ENCODE measurements at regions of chr5 and their contacts with region 1.

Region 1: DNA sequence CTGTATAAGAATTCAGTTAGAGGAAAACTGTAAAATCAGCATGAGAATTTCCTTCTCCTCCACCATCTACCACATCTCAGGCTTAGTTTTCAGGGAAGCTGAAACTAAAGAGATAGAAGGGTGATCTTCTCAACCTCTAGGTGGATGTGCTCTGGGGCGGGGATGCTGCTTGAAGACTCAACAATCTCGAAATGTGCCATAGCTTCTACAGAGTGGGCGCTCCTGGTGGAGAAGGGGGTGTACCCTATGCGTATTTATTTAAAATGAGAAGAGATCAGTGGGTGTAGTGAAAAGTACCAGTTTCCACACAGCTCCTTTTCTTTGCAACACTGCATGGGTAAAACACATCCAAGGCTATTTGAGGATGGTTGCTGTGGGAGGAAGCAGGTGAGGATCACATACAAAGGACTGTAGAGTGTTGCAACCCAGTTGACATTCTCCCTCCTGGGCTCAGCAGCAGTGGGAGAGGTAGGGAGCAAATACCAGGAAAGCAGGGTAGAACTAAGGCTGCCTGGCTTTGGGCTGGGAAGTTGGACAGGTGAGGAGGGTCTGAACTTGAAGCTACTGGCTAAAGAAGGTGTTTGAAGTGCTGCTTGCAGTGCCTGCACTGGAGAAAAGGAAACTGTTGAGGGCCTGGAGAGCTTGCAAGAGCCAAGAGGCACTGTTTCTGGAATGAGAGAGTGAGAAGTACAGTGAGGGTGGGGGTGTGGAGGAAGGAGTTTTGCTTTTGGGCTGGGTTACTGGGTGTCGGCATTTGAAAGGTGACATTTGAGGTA is 73.1 kb downstream of the MAST4 start:
- DNase-seq: no peak
- ATAC-seq: no peak
- H3K4me3 Mint-ChIP-seq: no peak overlapping the region
- H3K27ac Mint-ChIP-seq: no peak overlapping the region
- H3K4me1 Mint-ChIP-seq: no peaks in the 10 kb centered on the region
- H3K27me3 Mint-ChIP-seq: peaks cover 21% of the 10 kb centered on the region

Region 2: GRCh38 chr5:66511491-66511890 is 157.8 kb before region 1 on chr5:
- CTCF ChIA-PET with region 1: no interaction called
- POLR2A ChIA-PET with region 1: no interaction called
- intact Hi-C with region 1: no loop called
- DNase-seq: no peak
- ATAC-seq: no peak
- H3K4me3 Mint-ChIP-seq: no peak overlapping the region
- H3K27ac Mint-ChIP-seq: no peak overlapping the region
- H3K4me1 Mint-ChIP-seq: peaks cover 6% of the 10 kb centered on the region
- H3K27me3 Mint-ChIP-seq: peaks cover 4% of the 10 kb centered on the region

Region 3: GRCh38 chr5:66717455-66718373 is 48.4 kb after region 1 on chr5:
- CTCF ChIA-PET with region 1: no interaction called
- POLR2A ChIA-PET with region 1: no interaction called
- intact Hi-C with region 1: loop called in 1 of 2 experiments (anchors 2 kb)
- DNase-seq: no peak
- ATAC-seq: no peak
- H3K4me3 Mint-ChIP-seq: no peak overlapping the region
- H3K27ac Mint-ChIP-seq: no peak overlapping the region
- H3K4me1 Mint-ChIP-seq: no peaks in the 10 kb centered on the region
- H3K27me3 Mint-ChIP-seq: peaks cover 15% of the 10 kb centered on the region